GM13977 (cell line): ENCODE measurements at regions of chr5 and their contacts with region 1.

Region 1: DNA sequence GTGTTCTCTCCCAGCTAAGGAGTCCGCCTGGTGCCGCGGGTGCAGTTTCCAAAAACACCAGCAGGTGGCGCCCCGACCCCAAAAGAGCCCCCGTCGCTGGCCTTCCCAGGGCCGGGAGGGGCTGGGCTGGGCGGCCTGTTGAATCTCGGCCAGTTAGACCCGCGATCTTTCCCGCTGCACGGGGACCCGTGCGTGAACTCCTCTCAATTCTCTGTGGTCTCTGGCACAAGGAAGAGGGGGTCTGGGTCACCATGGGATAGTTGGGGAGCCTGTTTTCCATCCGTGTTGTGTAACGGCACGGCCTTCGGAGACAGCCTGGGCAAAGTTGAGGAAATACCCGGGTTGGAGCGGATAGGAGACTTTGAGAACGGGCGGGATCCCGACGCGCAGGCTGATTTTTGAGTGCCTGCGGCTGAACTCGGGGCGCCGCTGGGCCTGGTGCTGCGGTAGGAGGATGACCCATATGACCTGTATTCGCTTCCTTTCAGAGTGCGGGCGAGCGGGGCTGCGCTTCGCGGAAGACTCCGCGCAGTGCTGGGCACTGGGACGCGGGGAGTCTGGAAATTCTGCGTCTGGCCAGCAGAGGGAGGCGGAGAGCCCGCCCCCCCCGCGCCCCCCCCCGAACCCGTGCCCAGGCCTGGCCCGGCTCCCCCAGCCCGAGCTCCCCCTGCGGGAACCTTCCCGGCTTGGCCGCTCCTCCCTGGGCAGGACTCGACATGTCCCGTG is 7.9 kb upstream of the PSD2 start:
- DNase-seq: peak; percentile 95
- CTCF ChIP-seq: peak; percentile 94

Region 2: GRCh38 chr5:139251695-139252288 is 535.9 kb before region 1 on chr5:
- in situ Hi-C with region 1: no loop called
- DNase-seq: no peak
- CTCF ChIP-seq: no peak

Region 3: GRCh38 chr5:139849942-139850341 is 62.2 kb after region 1 on chr5:
- in situ Hi-C with region 1: loop called (anchors 10 kb)
- DNase-seq: no peak
- CTCF ChIP-seq: no peak

Region 4: GRCh38 chr5:139974661-139975060 is 186.9 kb after region 1 on chr5:
- in situ Hi-C with region 1: loop called (anchors 10 kb)
- DNase-seq: no peak
- CTCF ChIP-seq: no peak

Region 5: GRCh38 chr5:140157032-140157803 is 369.5 kb after region 1 on chr5:
- in situ Hi-C with region 1: loop called (anchors 25 kb)
- DNase-seq: peak; percentile 89
- CTCF ChIP-seq: peak; percentile 89